Endothelial cell of umbilical vein (primary cell): ENCODE measurements at regions of chr11 and their contacts with region 1.

Region 1: DNA sequence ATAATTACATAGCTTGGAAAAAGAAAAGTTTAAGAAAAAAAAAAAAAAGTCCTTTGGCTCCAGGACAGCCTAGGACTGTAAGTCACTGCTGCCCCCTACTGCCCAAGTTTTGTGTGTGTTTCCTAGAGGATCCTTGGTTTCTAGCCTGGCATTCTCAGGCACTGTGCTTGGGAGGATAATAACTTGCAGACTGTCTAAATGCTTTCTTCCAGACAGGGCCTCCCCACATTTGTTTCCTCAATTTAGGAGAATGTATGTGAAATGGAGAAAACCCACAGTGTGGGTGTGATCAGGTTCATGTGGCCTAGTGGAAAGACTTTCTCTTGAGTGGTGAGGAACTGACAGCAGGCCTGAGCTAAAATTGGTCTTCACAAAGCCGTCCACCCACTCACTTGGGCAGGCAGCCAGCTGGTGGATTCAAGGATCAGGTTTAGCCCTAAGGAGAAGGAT is 191.0 kb downstream of the NAV2 start:
- DNase-seq: peak; percentile 74
- H3K4me3 ChIP-seq: no peak overlapping the region
- H3K27ac ChIP-seq: no peak overlapping the region
- H3K4me1 ChIP-seq: no peaks in the 10 kb centered on the region
- H3K27me3 ChIP-seq: no peaks in the 10 kb centered on the region
- CTCF ChIP-seq: peak; percentile 79 to 82
- POLR2A ChIP-seq: no peak

Region 2: DNA sequence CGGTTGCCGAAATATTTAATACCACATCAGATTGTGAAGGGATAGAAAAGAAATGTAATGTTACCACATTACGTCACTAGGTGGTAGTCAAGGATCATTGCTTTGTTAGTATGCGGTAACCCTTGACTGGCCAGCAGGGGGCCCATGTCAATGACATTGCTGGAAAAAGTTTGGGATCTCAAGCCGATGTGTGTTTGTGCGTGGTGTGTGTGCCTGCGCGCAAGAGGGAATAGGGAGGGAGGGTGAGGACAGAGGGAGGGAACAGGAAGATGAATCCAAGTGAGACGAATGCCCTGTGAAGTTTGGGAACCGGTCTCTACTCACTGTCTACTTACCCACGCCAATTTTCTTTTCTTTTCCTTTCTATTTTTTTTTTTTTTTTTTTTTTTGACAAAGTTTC is 832.4 kb before region 1 on chr11:
- CTCF ChIA-PET with region 1: interaction called, 5 read pairs
- POLR2A ChIA-PET with region 1: no interaction called
- dilution Hi-C with region 1: no loop called
- intact Hi-C with region 1: loop called (anchors 5 kb)
- DNase-seq: peak; percentile 84
- H3K4me3 ChIP-seq: no peak overlapping the region
- H3K27ac ChIP-seq: no peak overlapping the region
- H3K4me1 ChIP-seq: no peaks in the 10 kb centered on the region
- H3K27me3 ChIP-seq: peaks cover 13 to 23% of the 10 kb centered on the region in 2 experiments
- CTCF ChIP-seq: peak; percentile 89 to 98
- POLR2A ChIP-seq: no peak

Region 3: DNA sequence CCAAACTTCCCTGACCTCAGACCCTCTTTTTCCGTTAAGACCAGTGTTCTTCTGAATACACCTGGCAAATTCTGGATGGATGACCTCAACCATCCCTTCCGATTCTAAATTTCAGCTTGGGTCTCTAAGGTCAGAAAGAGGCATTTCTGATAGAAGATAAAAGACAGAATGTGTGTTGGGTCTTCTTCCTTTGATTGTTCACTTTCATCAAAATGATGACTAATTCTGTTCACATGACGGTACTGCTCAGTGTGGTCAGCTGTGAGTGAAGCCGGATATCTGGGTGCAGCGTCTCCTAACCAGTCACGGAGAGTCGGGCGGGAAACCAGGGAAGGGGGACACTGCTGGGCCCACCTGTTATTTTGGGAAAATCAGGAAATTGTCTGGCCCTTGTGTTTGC is 342.6 kb before region 1 on chr11:
- CTCF ChIA-PET with region 1: interaction called, 91 read pairs
- POLR2A ChIA-PET with region 1: no interaction called
- dilution Hi-C with region 1: no loop called
- intact Hi-C with region 1: loop called (anchors 1 kb)
- DNase-seq: peak; percentile 81
- H3K4me3 ChIP-seq: no peak overlapping the region
- H3K27ac ChIP-seq: peak overlapping the region; percentile 61
- H3K4me1 ChIP-seq: peaks cover 23% of the 10 kb centered on the region
- H3K27me3 ChIP-seq: no peaks in the 10 kb centered on the region
- CTCF ChIP-seq: no peak
- POLR2A ChIP-seq: no peak

Region 4: GRCh38 chr11:19763330-19763729 is 140.3 kb before region 1 on chr11:
- CTCF ChIA-PET with region 1: interaction called, 6 read pairs
- POLR2A ChIA-PET with region 1: no interaction called
- dilution Hi-C with region 1: no loop called
- intact Hi-C with region 1: loop called (anchors 5 kb)
- DNase-seq: peak; percentile 82
- H3K4me3 ChIP-seq: no peak overlapping the region
- H3K27ac ChIP-seq: no peak overlapping the region
- H3K4me1 ChIP-seq: peaks cover 3% of the 10 kb centered on the region
- H3K27me3 ChIP-seq: no peaks in the 10 kb centered on the region
- CTCF ChIP-seq: no peak
- POLR2A ChIP-seq: no peak

Region 5: DNA sequence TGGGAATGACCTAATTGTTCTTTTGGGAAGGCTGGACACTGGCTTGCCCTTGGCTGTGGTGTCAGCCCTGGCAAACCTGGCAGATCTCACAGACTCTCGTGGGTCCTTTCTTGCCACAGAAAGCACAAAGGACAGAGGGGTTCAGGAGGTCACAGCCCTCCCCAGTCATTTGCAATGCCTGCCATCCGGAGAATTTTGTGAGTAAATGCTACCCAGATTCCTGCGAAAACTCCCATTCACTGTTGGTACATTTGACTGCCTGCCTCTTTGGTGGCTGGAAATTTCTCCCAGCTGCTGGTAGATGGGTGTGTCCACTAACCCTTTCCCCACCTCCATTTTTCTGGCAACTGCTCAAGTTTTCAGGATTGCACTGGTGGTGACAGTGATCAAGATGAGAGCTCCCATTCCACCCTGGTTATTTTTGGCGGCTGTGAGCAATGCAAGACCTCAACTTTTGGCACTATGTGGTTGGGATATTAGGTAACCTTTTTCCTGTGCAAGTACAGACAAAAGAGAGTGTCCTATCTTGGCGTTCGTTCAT is 35.3 kb before region 1 on chr11:
- CTCF ChIA-PET with region 1: interaction called, 5 read pairs
- POLR2A ChIA-PET with region 1: no interaction called
- dilution Hi-C with region 1: no loop called
- intact Hi-C with region 1: loop called (anchors 2 kb)
- DNase-seq: peak; percentile 38
- H3K4me3 ChIP-seq: no peak overlapping the region
- H3K27ac ChIP-seq: no peak overlapping the region
- H3K4me1 ChIP-seq: peaks cover 34% of the 10 kb centered on the region
- H3K27me3 ChIP-seq: no peaks in the 10 kb centered on the region
- CTCF ChIP-seq: no peak
- POLR2A ChIP-seq: no peak

Region 6: DNA sequence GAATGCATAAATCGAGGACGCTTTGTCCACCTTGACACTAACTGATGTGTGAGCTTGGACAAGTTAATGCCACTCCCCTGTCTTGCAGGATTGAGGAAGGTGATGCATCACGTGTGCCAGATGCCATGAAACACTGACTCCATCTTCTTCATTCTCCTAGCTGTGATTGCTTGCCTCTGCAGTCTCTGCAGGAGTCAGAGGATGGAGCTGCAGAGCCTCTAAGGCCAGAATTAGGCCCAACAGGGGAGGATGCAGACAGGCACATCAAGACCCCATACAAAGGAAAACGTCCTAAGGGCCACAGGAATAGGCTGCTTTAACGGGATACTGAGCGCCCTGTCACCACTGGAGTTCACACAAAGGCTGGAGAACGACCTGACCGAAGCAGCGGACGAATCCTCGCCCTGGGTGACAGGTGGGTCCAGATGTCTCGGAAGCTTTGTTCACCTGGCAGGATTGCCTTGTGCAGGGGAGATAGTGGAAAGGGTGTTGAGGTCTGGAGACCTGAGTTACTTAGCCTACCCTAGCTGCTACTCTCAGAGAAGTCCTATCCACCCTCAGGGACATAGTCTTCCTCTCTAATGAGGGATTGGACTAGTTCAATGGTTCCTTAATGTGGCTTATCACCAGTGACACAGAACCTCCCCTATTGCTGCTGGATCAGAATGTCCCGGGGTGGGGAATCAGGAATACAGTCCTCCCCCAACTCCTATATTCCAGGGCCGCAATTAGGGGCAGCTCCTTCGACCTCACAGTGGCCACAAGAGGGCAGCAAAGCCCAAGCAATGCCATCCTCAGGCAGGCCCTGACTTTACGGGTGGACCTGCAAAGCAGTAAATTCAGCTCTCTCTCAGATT is 224.3 kb after region 1 on chr11:
- CTCF ChIA-PET with region 1: interaction called, 13 read pairs
- POLR2A ChIA-PET with region 1: no interaction called
- dilution Hi-C with region 1: no loop called
- intact Hi-C with region 1: loop called (anchors 1 kb)
- DNase-seq: peak; percentile 69
- H3K4me3 ChIP-seq: no peak overlapping the region
- H3K27ac ChIP-seq: no peak overlapping the region
- H3K4me1 ChIP-seq: peaks cover 4% of the 10 kb centered on the region
- H3K27me3 ChIP-seq: no peaks in the 10 kb centered on the region
- CTCF ChIP-seq: peak; percentile 82 to 91
- POLR2A ChIP-seq: no peak